ENCODE measurements at regions of chrX and their contacts with region 1.

Region 1: DNA sequence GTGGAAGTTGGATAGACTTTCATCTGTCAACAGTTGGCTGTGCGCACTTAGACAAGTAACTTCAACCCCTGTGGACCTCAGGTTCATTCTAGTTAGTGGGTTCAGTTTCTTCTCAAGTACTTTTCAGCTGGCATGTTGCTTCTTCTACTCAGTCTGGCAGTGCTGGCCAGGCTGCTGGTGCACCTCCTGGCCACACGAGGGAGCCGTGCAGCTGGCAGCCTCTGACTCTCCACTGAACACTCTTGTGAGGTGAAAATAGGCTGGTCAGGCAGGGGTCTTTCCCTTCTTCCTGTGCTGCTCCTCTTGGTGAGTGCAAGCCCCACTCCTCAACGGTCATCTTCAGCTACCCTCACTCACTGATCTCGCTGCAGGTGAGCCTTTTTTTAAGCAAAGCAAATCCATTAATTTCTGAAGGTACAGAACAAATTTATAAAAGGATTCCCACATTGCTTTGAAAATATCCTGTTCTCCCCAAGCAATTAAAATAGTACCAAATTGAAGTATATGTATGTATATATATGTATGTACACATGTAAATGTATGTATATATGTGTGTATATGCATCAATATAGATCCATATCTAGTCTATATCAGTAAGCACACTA is 30.6 kb downstream of the LONRF3 start:
- DNase-seq: peak; percentile 12
- ATAC-seq: peak; percentile 93
- H3K4me3 ChIP-seq: no peak overlapping the region
- H3K27ac ChIP-seq: no peak overlapping the region
- H3K4me1 ChIP-seq: no peaks in the 10 kb centered on the region
- H3K27me3 ChIP-seq: no peaks in the 10 kb centered on the region
- CTCF ChIP-seq: peak; percentile 82
- EP300 ChIP-seq: no peak
- POLR2A ChIP-seq: no peak
- RAD21 ChIP-seq: 0 out of 2 replicates have a peak, but pooled peaks have one; percentile 24

Region 2: GRCh38 chrX:118904218-118904617 is 100.8 kb before region 1 on chrX:
- CTCF ChIA-PET with region 1: no interaction called
- POLR2A ChIA-PET with region 1: no interaction called
- in situ Hi-C with region 1: no loop called
- intact Hi-C with region 1: no loop called
- DNase-seq: no peak
- ATAC-seq: no peak
- H3K4me3 ChIP-seq: no peak overlapping the region
- H3K27ac ChIP-seq: no peak overlapping the region
- H3K4me1 ChIP-seq: 0 out of 2 replicates have a peak, but pooled peaks cover 1% of the 10 kb centered on the region
- H3K27me3 ChIP-seq: no peaks in the 10 kb centered on the region
- CTCF ChIP-seq: no peak
- EP300 ChIP-seq: no peak
- POLR2A ChIP-seq: no peak
- RAD21 ChIP-seq: no peak

Region 3: DNA sequence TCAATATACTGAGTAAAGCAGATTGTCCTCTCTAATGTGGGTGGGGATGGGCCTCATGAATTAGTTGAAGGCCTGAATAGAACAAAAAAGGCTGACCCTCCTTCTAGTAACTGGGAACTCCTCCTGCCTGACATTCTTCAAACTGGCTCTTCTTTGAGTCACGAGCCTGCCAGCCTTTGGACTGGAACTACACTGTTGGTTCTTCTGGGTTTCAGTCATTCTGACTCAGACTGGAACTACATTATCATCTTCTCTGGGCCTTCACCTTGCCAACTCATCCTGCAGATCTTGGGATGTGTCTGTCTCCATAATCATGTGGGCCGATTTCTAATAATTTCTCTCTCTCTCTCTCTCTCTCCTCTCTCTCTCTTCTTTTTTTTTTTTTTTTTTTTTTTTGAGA is 40.9 kb after region 1 on chrX:
- CTCF ChIA-PET with region 1: no interaction called
- POLR2A ChIA-PET with region 1: no interaction called
- in situ Hi-C with region 1: no loop called
- intact Hi-C with region 1: no loop called
- DNase-seq: no peak
- ATAC-seq: no peak
- H3K4me3 ChIP-seq: no peak overlapping the region
- H3K27ac ChIP-seq: no peak overlapping the region
- H3K4me1 ChIP-seq: peaks cover 12% of the 10 kb centered on the region
- H3K27me3 ChIP-seq: no peaks in the 10 kb centered on the region
- CTCF ChIP-seq: no peak
- EP300 ChIP-seq: no peak
- POLR2A ChIP-seq: no peak
- RAD21 ChIP-seq: no peak

Region 4: GRCh38 chrX:119067023-119067739 is 62.2 kb after region 1 on chrX:
- CTCF ChIA-PET with region 1: interaction called, 4 read pairs
- POLR2A ChIA-PET with region 1: no interaction called
- in situ Hi-C with region 1: no loop called
- intact Hi-C with region 1: loop called (anchors 1 kb)
- DNase-seq: peak; percentile 4
- ATAC-seq: peak; percentile 70
- H3K4me3 ChIP-seq: no peak overlapping the region
- H3K27ac ChIP-seq: no peak overlapping the region
- H3K4me1 ChIP-seq: no peaks in the 10 kb centered on the region
- H3K27me3 ChIP-seq: no peaks in the 10 kb centered on the region
- CTCF ChIP-seq: peak; percentile 63
- EP300 ChIP-seq: no peak
- POLR2A ChIP-seq: no peak
- RAD21 ChIP-seq: peak; percentile 29; the same call in 1 of the 2 replicates

Measured in HepG2 (cell line).